Esophagus muscularis mucosa (tissue), 4 donors: ENCODE measurements at regions of chr1 and their contacts with region 1.

Region 1: DNA sequence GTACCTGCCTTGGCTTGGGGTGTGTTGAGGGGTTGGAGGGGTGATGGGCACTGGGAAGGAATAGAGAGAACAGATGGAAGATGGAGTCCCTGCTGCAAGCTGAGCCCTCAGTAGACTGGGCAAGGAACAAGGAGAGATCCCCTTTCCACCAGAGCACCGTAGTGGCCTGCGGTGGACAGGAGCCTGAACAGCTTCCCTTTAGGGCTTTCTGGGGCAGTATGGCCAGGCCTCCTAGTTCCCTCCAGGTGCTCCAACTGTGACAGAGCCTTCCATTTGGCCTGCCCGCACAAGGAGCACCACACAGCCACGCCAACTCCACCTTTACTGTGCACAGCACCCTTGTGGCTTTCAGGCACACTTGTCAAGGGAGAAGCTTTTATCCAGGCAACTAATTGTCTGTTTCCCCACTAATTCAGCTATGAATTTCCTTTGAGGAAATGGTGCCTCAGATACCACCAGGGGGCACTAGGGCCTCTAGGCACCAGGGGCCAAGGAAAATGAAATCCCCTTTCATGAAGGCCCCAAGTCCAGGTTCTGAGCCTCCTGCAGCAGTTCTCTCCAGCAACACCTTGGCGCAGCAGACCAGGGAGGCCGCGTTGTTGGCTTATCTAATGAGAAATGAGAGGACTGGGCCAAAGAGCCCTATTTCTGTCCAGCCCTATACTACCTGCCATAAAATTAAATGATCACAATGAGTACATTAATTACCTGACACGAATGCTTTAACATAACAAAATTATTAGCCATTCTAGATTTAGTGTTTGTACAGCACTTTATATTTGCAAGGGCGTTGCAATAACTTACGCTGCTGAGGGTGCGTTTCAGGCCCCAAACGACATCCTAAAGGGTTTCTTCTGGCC is 23.1 kb upstream of the ERI3 start:
- DNase-seq: no peak
- H3K4me3 ChIP-seq: no peak overlapping the region
- H3K27ac ChIP-seq: no peak overlapping the region
- H3K4me1 ChIP-seq: no peaks in the 10 kb centered on the region
- H3K27me3 ChIP-seq: no peaks in the 10 kb centered on the region
- CTCF ChIP-seq: peak; percentile 55 to 70 (median 59)
- EP300 ChIP-seq: no peak
- POLR2A ChIP-seq: no peak

Region 2: DNA sequence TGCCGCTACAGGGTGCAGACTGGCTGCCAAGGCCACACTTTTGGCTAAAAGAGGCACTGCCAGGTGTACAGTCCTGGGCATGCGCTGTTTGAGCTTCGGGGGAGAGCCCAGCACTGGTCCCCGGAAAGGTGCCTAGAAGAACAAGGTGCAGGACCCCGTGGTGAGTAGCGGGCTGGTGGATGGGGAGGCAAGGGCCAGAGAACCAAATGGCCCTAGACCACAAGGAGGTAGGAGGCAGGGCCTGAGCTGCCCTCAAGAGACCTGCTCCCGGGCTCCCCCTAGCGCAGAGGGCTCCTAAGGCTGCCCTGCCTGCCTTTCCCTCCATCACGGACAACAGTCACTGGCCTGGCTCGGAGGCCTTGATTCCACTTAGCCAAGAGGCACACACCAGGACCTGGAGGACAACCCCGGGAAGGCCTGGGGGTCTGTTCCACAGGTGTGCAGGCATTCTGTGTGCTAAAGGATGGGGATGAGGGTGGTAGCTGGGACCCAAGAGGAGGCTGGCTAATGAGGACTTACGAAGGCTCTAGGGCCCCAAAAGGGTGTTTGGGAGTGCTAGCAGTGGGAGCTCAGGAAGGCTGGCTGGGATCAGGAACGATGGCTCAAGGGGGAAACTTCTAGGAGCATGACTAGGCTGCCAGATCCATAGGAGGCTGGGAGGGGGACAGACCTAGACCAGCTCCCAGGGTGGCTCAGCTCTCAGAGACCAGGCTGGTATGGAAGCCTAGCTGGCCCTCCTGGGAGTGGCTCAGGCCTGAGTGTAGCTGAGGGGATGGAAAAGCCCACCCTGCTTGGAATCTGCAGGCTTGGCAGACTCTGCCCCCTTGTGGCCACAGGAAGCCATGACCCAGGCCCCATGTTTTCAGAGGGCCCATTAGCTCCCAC is 443.8 kb before region 1 on chr1:
- intact Hi-C with region 1: no loop called
- DNase-seq: no peak
- H3K4me3 ChIP-seq: peak overlapping the region; percentile 47 to 55 (median 53)
- H3K27ac ChIP-seq: peak overlapping the region; percentile 4 to 49 (median 32)
- H3K4me1 ChIP-seq: peaks cover 20 to 44% (median 42%) of the 10 kb centered on the region in 4 donors
- H3K27me3 ChIP-seq: peaks cover 0 to 18% (median 0%) of the 10 kb centered on the region in 4 donors
- CTCF ChIP-seq: peak; percentile 89 to 92 (median 90)
- EP300 ChIP-seq: no peak
- POLR2A ChIP-seq: no peak

Region 3: GRCh38 chr1:44594871-44595746 is 217.0 kb after region 1 on chr1:
- intact Hi-C with region 1: loop called (anchors 2 kb)
- DNase-seq: peak; percentile 95
- H3K4me3 ChIP-seq: no peak overlapping the region
- H3K27ac ChIP-seq: no peak overlapping the region
- H3K4me1 ChIP-seq: peaks cover 0 to 4% (median 2%) of the 10 kb centered on the region in 4 donors
- H3K27me3 ChIP-seq: peaks cover 0 to 38% (median 0%) of the 10 kb centered on the region in 4 donors
- CTCF ChIP-seq: peak in 2 of 3 experiments; percentile 92 to 93
- EP300 ChIP-seq: no peak
- POLR2A ChIP-seq: no peak